ENCODE measurements at regions of chr6 and their contacts with region 1.

Region 1: GRCh38 chr6:26312501-26313390 is 52.3 kb upstream of the BTN3A2 start:
- DNase-seq: peak; percentile 74 to 92 (median 87)
- ATAC-seq: peak; percentile 51
- H3K4me3 ChIP-seq: peak overlapping the region; percentile 70 to 76
- H3K4me3 Mint-ChIP-seq: peak overlapping the region; percentile 89
- H3K27ac ChIP-seq: peak overlapping the region; percentile 38 to 49
- H3K27ac Mint-ChIP-seq: peak overlapping the region; percentile 93
- H3K4me1 ChIP-seq: no peaks in the 10 kb centered on the region
- H3K4me1 Mint-ChIP-seq: peaks cover 41% of the 10 kb centered on the region
- H3K27me3 ChIP-seq: no peaks in the 10 kb centered on the region
- H3K27me3 Mint-ChIP-seq: no peaks in the 10 kb centered on the region
- CTCF ChIP-seq: no peak

Region 2: DNA sequence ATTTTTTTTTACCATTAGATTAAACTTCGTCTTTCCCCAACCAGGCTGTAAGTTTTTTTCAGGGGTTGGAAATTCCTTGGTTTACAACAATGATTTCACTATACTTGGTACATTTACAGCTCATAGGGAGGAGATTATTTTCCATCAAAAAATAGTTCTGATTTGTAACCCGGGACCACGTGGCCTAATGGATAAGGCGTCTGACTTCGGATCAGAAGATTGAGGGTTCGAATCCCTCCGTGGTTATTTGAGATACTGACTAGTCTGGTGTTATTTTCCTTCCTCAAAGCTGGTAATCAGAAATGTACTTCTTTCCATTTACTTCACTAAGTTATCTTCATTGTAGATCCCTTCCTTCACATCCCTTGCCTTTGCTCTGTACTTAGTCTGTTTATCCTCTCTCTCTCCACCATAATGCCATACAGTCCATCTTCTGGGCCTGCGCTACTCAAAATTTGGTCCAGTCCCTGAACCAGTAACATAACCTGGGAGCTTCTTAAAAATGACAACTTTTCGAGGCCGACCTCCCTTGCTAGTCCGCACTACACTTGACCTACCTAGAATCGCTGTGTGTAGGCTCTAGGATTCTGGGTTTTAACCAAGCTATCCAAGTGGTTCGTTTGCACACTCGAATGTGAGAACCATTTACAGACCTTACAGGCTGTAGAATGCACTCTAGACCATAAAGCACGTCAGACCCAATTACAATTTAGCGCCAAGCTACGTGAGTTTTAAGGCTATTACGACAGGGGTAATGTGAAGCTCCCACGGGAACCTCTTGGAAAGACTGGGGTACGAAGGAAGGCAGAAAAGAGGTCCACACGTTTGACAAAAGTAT is 10.1 kb after region 1 on chr6:
- CTCF ChIA-PET with region 1: interaction called, 8 read pairs
- POLR2A ChIA-PET with region 1: interaction called, 15 read pairs
- intact Hi-C with region 1: loop called (anchors 1 kb)
- DNase-seq: peak in 8 of 9 experiments; percentile 32 to 86 (median 58)
- ATAC-seq: peak; percentile 65
- H3K4me3 ChIP-seq: peak overlapping the region; percentile 55 to 64
- H3K4me3 Mint-ChIP-seq: peak overlapping the region; percentile 88
- H3K27ac ChIP-seq: no peak overlapping the region
- H3K27ac Mint-ChIP-seq: peak overlapping the region; percentile 90
- H3K4me1 ChIP-seq: peaks cover 5% of the 10 kb centered on the region
- H3K4me1 Mint-ChIP-seq: peaks cover 24% of the 10 kb centered on the region
- H3K27me3 ChIP-seq: peaks cover 0 to 2% of the 10 kb centered on the region in 2 experiments
- H3K27me3 Mint-ChIP-seq: peaks cover 15% of the 10 kb centered on the region
- CTCF ChIP-seq: no peak

Region 3: GRCh38 chr6:26329763-26330511 is 17.2 kb after region 1 on chr6:
- CTCF ChIA-PET with region 1: interaction called, 4 read pairs
- POLR2A ChIA-PET with region 1: interaction called, 5 read pairs
- intact Hi-C with region 1: loop called in 1 of 2 experiments (anchors 2 kb)
- DNase-seq: peak in 7 of 9 experiments; percentile 35 to 81 (median 60)
- ATAC-seq: peak; percentile 27
- H3K4me3 ChIP-seq: no peak overlapping the region
- H3K4me3 Mint-ChIP-seq: peak overlapping the region; percentile 59
- H3K27ac ChIP-seq: no peak overlapping the region
- H3K27ac Mint-ChIP-seq: peak overlapping the region; percentile 85
- H3K4me1 ChIP-seq: peaks cover 18% of the 10 kb centered on the region
- H3K4me1 Mint-ChIP-seq: peaks cover 53% of the 10 kb centered on the region
- H3K27me3 ChIP-seq: peaks cover 8 to 11% of the 10 kb centered on the region in 2 experiments
- H3K27me3 Mint-ChIP-seq: peaks cover 27% of the 10 kb centered on the region
- CTCF ChIP-seq: no peak

Region 4: DNA sequence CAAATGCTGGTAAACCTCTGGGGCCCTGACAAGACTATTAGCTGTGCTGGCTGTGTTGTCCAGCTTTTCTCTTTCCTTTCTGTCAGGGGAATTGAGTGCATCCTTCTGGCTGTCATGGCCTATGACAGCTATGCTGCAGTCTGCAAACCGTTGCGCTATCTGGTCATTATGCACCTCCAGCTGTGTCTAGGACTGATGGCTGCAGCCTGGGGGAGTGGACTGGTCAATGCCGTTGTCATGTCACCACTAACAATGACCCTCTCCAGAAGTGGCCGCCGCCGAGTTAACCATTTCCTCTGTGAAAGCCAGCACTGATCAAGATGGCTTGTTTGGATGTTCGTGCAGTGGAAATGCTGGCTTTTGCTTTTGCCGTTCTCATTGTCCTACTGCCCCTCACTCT is 1664.6 kb after region 1 on chr6:
- CTCF ChIA-PET with region 1: no interaction called
- POLR2A ChIA-PET with region 1: no interaction called
- intact Hi-C with region 1: no loop called
- DNase-seq: no peak
- ATAC-seq: no peak
- H3K4me3 ChIP-seq: no peak overlapping the region
- H3K4me3 Mint-ChIP-seq: no peak overlapping the region
- H3K27ac ChIP-seq: no peak overlapping the region
- H3K27ac Mint-ChIP-seq: no peak overlapping the region
- H3K4me1 ChIP-seq: no peaks in the 10 kb centered on the region
- H3K4me1 Mint-ChIP-seq: no peaks in the 10 kb centered on the region
- H3K27me3 ChIP-seq: no peaks in the 10 kb centered on the region
- H3K27me3 Mint-ChIP-seq: peaks cover 27% of the 10 kb centered on the region
- CTCF ChIP-seq: no peak

Measured in CD8-positive, alpha-beta T cell (primary cell).